Common myeloid progenitor, CD34-positive (primary cell): ENCODE measurements at regions of chr6 and their contacts with region 1.

Region 1: GRCh38 chr6:167291623-167292300 is 647 bp downstream of the UNC93A start:
- DNase-seq: no peak
- H3K4me3 ChIP-seq: no peak overlapping the region
- H3K27ac ChIP-seq: no peak overlapping the region
- H3K4me1 ChIP-seq: no peaks in the 10 kb centered on the region
- H3K27me3 ChIP-seq: peaks cover 0 to 25% (median 12%) of the 10 kb centered on the region in 5 experiments

Region 2: DNA sequence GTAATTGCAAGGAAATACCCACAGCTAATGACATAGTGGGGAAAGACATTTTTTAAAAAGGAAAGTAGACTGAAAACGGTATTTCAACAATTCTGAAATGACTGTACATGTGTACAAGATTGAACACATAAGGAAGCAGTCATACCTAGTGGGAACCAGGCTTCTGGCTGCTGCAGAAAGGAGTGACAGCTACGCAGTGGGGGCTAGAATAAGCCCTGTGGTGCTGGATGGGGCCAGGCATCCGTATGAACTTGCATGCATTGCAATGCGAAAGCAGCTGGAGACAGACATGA is 79.1 kb before region 1 on chr6:
- CTCF ChIA-PET with region 1: interaction called, 11 read pairs
- POLR2A ChIA-PET with region 1: no interaction called
- DNase-seq: no peak
- H3K4me3 ChIP-seq: no peak overlapping the region
- H3K27ac ChIP-seq: no peak overlapping the region
- H3K4me1 ChIP-seq: no peaks in the 10 kb centered on the region
- H3K27me3 ChIP-seq: peaks cover 0 to 7% (median 2%) of the 10 kb centered on the region in 5 experiments

Region 3: GRCh38 chr6:167647306-167647705 is 355.5 kb after region 1 on chr6:
- CTCF ChIA-PET with region 1: no interaction called
- POLR2A ChIA-PET with region 1: no interaction called
- DNase-seq: peak in 2 of 3 donors; percentile 50 to 56
- H3K4me3 ChIP-seq: no peak overlapping the region
- H3K27ac ChIP-seq: no peak overlapping the region
- H3K4me1 ChIP-seq: peaks cover 0 to 38% (median 22%) of the 10 kb centered on the region in 4 experiments
- H3K27me3 ChIP-seq: peaks cover 0 to 4% (median 0%) of the 10 kb centered on the region in 5 experiments